CD8-positive, alpha-beta T cell (primary cell): ENCODE measurements at regions of chr20 and their contacts with region 1.

Region 1: DNA sequence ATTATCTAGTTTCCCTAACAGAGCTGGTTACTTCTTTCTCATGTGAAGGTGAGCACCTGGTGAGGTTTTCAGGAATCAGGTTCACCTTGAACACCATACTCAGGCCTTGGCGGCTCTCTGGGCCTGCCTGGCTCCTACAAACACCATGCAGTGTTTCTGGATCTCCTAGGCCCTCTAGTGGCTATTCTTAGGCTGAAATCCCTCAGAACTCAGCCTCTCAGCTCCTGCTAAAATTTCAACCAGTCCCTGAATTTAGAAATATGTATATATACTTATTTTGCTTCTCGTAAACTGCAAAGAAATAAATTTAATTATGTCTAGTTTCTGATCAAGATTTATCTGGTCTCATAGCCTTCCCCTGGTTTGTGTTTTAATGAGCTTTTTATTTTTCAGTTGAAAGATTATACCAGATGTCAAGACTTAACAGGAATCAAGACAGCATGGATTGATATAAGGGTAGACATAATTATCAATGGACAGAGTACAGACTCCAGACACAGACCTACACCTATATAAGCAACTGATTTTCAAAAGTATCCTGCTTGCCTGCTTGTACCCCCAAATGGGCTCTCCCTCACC is 55.9 kb downstream of the ANKEF1 start:
- DNase-seq: peak in 5 of 9 experiments; percentile 5 to 56 (median 24)
- ATAC-seq: peak; percentile 58
- H3K4me3 ChIP-seq: no peak overlapping the region
- H3K4me3 Mint-ChIP-seq: no peak overlapping the region
- H3K27ac ChIP-seq: no peak overlapping the region
- H3K27ac Mint-ChIP-seq: no peak overlapping the region
- H3K4me1 ChIP-seq: no peaks in the 10 kb centered on the region
- H3K4me1 Mint-ChIP-seq: no peaks in the 10 kb centered on the region
- H3K27me3 ChIP-seq: no peaks in the 10 kb centered on the region
- H3K27me3 Mint-ChIP-seq: peaks cover 6% of the 10 kb centered on the region
- CTCF ChIP-seq: peak; percentile 52

Region 2: DNA sequence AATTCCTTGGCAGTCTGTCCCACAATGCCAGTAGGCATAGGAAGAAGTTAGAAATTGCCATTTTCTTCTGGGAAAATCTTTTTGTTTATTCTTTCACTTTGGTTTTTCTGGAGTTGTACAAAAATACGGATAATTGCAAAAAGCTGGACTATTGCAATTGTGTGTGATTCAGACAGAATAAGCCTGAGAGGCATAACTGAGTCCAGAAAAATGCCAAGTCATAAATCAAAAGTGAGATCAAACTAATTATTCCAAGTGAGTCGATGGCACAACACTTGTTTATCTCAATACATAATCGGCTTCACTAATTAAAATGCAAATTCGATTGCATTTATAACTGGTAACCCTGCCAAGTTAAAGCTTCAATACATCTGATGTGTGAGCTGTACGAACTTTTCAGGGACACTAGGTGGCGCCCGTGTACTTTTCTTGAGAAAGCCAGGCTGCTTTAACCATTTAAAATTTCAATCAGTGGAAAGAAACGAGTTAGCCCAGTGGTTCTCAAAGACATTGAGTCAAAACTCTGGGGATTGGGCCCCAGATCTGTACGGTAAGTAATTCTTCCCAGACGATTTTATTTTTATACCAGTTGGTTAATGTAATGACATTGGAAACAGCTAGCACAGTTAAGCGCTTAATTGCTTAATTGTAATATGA is 473.7 kb before region 1 on chr20:
- CTCF ChIA-PET with region 1: interaction called, 5 read pairs
- POLR2A ChIA-PET with region 1: no interaction called
- intact Hi-C with region 1: loop called in 1 of 2 experiments (anchors 1 kb)
- DNase-seq: peak in 8 of 9 experiments; percentile 7 to 62 (median 42)
- ATAC-seq: peak; percentile 36
- H3K4me3 ChIP-seq: no peak overlapping the region
- H3K4me3 Mint-ChIP-seq: no peak overlapping the region
- H3K27ac ChIP-seq: no peak overlapping the region
- H3K27ac Mint-ChIP-seq: no peak overlapping the region
- H3K4me1 ChIP-seq: no peaks in the 10 kb centered on the region
- H3K4me1 Mint-ChIP-seq: no peaks in the 10 kb centered on the region
- H3K27me3 ChIP-seq: no peaks in the 10 kb centered on the region
- H3K27me3 Mint-ChIP-seq: peaks cover 2% of the 10 kb centered on the region
- CTCF ChIP-seq: peak; percentile 66

Region 3: GRCh38 chr20:9945408-9945807 is 145.3 kb before region 1 on chr20:
- CTCF ChIA-PET with region 1: no interaction called
- POLR2A ChIA-PET with region 1: no interaction called
- intact Hi-C with region 1: no loop called
- DNase-seq: no peak
- ATAC-seq: no peak
- H3K4me3 ChIP-seq: no peak overlapping the region
- H3K4me3 Mint-ChIP-seq: no peak overlapping the region
- H3K27ac ChIP-seq: no peak overlapping the region
- H3K27ac Mint-ChIP-seq: no peak overlapping the region
- H3K4me1 ChIP-seq: no peaks in the 10 kb centered on the region
- H3K4me1 Mint-ChIP-seq: no peaks in the 10 kb centered on the region
- H3K27me3 ChIP-seq: no peaks in the 10 kb centered on the region
- H3K27me3 Mint-ChIP-seq: peaks cover 2% of the 10 kb centered on the region
- CTCF ChIP-seq: no peak

Region 4: DNA sequence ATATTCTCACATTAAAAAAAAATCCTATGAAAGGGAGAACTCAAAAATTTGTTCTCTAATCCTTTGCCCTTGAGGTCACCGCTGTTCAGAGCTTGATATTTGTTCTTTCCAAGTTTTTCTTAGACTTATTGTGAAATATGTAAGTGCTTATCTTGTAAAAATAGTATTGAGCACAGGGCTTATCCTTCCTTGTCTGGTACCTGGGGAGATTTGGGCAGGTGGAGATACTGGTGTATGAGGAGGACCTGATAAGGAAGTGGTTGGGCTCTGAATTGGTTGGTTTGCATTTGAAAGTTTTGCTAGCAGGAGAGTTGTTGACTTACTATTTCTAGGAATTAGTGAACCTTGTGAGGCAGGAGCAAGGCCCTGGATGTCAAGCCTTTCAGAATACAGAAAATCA is 84.8 kb before region 1 on chr20:
- CTCF ChIA-PET with region 1: no interaction called
- POLR2A ChIA-PET with region 1: no interaction called
- intact Hi-C with region 1: no loop called
- DNase-seq: no peak
- ATAC-seq: no peak
- H3K4me3 ChIP-seq: no peak overlapping the region
- H3K4me3 Mint-ChIP-seq: no peak overlapping the region
- H3K27ac ChIP-seq: no peak overlapping the region
- H3K27ac Mint-ChIP-seq: no peak overlapping the region
- H3K4me1 ChIP-seq: no peaks in the 10 kb centered on the region
- H3K4me1 Mint-ChIP-seq: no peaks in the 10 kb centered on the region
- H3K27me3 ChIP-seq: no peaks in the 10 kb centered on the region
- H3K27me3 Mint-ChIP-seq: peaks cover 3% of the 10 kb centered on the region
- CTCF ChIP-seq: no peak

Region 5: GRCh38 chr20:10079964-10080363 is 10.7 kb before region 1 on chr20:
- CTCF ChIA-PET with region 1: interaction called, 12 read pairs
- POLR2A ChIA-PET with region 1: no interaction called
- intact Hi-C with region 1: no loop called
- DNase-seq: no peak
- ATAC-seq: no peak
- H3K4me3 ChIP-seq: no peak overlapping the region
- H3K4me3 Mint-ChIP-seq: no peak overlapping the region
- H3K27ac ChIP-seq: no peak overlapping the region
- H3K27ac Mint-ChIP-seq: no peak overlapping the region
- H3K4me1 ChIP-seq: no peaks in the 10 kb centered on the region
- H3K4me1 Mint-ChIP-seq: no peaks in the 10 kb centered on the region
- H3K27me3 ChIP-seq: no peaks in the 10 kb centered on the region
- H3K27me3 Mint-ChIP-seq: peaks cover 10% of the 10 kb centered on the region
- CTCF ChIP-seq: no peak

Region 6: DNA sequence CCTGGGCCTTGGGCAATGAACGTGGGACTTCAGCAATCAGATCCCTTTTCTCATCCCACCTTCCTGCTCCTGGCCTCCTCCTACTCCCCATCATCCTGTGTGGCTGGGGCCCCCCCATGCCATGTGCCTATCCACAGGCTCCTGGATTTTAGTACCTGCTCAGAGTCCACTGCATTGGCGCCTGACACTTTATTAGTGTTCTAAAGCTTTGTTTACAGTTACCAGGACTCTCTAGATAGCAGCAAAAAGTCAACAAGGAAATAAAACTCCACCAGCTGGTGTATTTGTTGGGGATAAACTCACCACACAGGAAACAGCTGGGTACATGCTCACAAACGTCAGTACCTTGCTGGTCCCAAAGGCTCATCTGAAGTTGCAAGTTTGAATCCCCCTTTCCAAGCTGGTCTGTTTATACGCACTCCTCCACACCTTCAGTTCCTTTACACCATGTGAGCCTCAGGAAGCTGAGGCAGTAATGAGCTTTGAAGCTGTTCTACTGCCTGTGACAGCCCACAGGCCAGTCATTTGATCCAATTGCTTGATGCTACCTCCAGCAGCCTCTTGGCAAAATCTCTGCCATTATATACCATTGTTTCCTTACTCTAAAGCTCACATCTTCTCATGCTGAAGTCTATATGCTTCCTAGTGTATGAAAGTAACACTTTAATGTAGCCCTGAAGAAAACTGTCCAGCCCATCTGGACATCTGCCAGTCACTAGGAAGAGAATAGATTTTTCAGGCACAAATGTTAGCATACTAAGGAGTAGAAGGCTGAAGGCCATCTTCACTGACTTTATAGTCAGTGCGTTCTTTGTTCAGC is 20.7 kb after region 1 on chr20:
- CTCF ChIA-PET with region 1: interaction called, 14 read pairs
- POLR2A ChIA-PET with region 1: no interaction called
- intact Hi-C with region 1: no loop called
- DNase-seq: no peak
- ATAC-seq: no peak
- H3K4me3 ChIP-seq: no peak overlapping the region
- H3K4me3 Mint-ChIP-seq: no peak overlapping the region
- H3K27ac ChIP-seq: no peak overlapping the region
- H3K27ac Mint-ChIP-seq: no peak overlapping the region
- H3K4me1 ChIP-seq: no peaks in the 10 kb centered on the region
- H3K4me1 Mint-ChIP-seq: no peaks in the 10 kb centered on the region
- H3K27me3 ChIP-seq: no peaks in the 10 kb centered on the region
- H3K27me3 Mint-ChIP-seq: no peaks in the 10 kb centered on the region
- CTCF ChIP-seq: no peak

Region 7: DNA sequence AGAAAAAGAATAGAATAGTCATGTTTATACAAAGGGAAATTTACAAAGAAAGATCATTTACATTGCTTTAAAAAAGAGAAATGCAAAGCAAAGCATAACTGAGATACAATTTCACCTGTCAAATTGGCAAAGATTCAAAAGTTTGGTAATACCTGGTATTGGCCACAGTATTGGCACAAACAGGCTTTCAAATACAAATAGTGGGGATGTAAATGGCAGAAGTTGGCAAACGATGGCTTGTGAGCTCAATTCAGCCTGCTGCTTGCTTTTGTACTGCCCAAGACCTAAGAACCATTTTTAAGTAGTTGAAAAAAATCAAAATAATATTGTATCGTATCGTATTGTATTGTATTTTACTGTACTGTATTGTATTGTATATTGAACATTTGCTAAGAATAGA is 777.6 kb after region 1 on chr20:
- CTCF ChIA-PET with region 1: no interaction called
- POLR2A ChIA-PET with region 1: no interaction called
- intact Hi-C with region 1: no loop called
- DNase-seq: no peak
- ATAC-seq: no peak
- H3K4me3 ChIP-seq: no peak overlapping the region
- H3K4me3 Mint-ChIP-seq: no peak overlapping the region
- H3K27ac ChIP-seq: no peak overlapping the region
- H3K27ac Mint-ChIP-seq: no peak overlapping the region
- H3K4me1 ChIP-seq: no peaks in the 10 kb centered on the region
- H3K4me1 Mint-ChIP-seq: no peaks in the 10 kb centered on the region
- H3K27me3 ChIP-seq: no peaks in the 10 kb centered on the region
- H3K27me3 Mint-ChIP-seq: no peaks in the 10 kb centered on the region
- CTCF ChIP-seq: no peak